Adrenal gland (tissue), 19 donors: ENCODE measurements at regions of chr18 and their contacts with region 1.

Region 1: DNA sequence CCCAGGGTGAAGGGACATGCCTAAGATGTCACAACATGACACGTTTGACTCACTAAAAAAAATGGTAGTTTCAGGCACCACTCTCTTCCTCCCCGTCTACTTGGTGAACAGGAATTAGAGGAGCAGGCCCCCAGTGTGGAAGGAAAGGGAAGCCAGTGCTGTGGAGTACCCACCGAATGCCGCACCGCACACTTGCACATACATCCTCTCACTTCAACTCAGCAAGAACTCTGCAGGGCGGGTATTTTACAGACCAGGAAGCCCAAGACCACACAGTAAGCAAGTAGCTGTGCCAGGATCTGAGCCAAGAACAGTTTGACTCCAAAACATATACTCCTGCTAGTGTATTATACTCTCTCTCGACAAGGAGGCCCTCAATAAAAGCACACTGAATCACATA is 69.8 kb downstream of the BCL2 start:
- DNase-seq: peak in 1 of 7 donors; percentile 26
- H3K4me3 ChIP-seq: no peak overlapping the region
- H3K27ac ChIP-seq: peak overlapping the region in 2 of 5 donors; percentile 3 to 54
- H3K4me1 ChIP-seq: peaks cover 0 to 4% of the 10 kb centered on the region in 2 donors
- H3K27me3 ChIP-seq: no peaks in the 10 kb centered on the region
- CTCF ChIP-seq: no peak
- POLR2A ChIP-seq: no peak

Region 2: DNA sequence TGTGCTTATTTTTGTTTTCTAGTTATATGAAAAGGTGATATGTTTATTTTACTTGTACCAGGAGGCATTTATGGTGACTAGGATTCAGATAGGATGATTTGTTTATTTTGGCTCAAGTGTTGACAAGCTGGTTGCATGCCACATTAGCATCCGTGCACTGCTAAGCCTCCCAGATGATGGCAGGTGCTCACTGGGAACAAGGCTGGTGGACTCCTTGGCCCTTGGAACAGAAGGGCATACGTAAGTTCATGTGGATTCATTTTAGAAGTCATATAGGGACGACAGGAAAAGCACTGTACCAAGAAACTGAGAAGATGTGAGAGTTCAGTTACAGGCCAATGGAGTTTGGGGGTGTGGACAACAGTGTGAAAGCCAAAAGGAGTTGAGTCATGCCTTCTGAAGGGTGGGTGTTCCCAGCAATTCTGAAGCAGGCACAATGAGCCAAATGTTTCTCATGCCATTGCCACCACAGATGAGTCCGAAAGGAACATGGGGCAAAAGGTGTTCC is 368.2 kb before region 1 on chr18:
- intact Hi-C with region 1: no loop called
- DNase-seq: peak in 4 of 7 donors; percentile 23 to 57 (median 41)
- H3K4me3 ChIP-seq: no peak overlapping the region
- H3K27ac ChIP-seq: no peak overlapping the region
- H3K4me1 ChIP-seq: peaks cover 3 to 33% of the 10 kb centered on the region in 2 donors
- H3K27me3 ChIP-seq: no peaks in the 10 kb centered on the region
- CTCF ChIP-seq: no peak
- POLR2A ChIP-seq: no peak

Region 3: DNA sequence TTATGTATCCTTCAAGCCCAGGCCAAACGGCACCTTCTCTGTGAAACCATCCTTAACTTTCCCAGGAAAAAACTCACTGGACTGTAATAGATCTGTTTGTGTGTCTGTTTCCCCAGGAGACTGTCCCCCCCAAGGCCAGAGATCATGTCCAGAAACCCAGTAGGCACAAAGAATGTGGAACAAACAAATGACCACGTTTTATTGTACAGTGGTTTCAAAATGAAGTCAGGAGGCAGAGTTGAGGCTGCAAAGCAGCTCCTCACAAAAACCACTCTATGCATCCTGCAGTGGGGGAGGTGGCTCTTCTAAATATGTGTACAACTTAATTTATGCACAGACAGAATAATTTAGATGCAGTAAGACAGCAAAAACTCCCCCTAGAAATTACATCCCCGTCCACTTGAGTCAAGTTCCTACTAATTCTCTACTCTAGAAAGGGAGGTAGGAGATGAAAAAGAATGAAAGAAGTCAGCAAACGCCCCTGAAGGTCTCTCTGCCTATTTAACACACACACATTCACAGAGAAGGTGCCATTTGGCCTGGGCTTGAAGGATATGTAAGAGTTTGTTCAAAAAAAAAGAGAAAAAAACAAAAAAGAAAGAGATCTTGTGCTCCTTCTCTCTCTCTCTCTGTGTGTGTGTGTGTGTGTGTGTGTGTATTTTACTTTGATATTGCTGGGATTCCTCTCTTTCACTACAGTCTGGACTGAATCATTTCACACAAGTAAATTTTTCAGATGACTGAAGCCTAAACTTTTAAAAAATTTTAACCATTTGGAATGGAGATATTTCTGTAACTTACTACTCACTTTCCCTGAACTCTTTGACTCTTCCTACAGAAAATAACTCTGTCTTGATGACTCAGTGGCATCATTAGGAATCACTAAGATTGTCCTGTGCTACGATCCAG is 50.3 kb after region 1 on chr18:
- intact Hi-C with region 1: loop called in 1 of 2 experiments (anchors 10 kb)
- DNase-seq: no peak
- H3K4me3 ChIP-seq: no peak overlapping the region
- H3K27ac ChIP-seq: no peak overlapping the region
- H3K4me1 ChIP-seq: peaks cover 0 to 5% of the 10 kb centered on the region in 2 donors
- H3K27me3 ChIP-seq: no peaks in the 10 kb centered on the region
- CTCF ChIP-seq: no peak
- POLR2A ChIP-seq: no peak